MCF 10A (cell line): ENCODE measurements at regions of chr13 and their contacts with region 1.

Region 1: DNA sequence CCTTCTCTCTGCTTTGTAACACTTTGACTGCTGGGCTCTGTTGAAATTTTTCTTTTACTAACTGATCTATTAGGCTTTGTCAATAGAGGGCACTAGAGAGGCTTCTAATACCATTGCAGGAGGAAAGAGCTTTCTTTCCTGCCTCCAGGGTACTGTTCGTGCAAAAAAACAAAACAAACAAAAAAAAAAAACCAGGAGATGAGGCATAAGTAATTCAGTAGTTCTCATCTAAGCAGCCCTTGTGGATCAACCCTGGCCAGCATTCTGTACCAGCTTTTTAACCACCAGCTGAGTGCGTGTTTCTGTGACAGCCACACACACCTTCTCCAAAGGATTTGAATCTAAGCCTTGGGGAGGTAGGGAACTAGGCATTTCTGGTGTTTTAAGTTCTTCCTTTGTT is 1707.6 kb upstream of the SLC10A2 start:
- DNase-seq: peak; percentile 68
- H3K4me3 Mint-ChIP-seq: no peak overlapping the region
- H3K27ac Mint-ChIP-seq: no peak overlapping the region
- H3K4me1 Mint-ChIP-seq: peaks cover 11% of the 10 kb centered on the region
- H3K27me3 Mint-ChIP-seq: no peaks in the 10 kb centered on the region
- CTCF ChIP-seq: peak; percentile 62

Region 2: GRCh38 chr13:103883164-103883563 is 890.6 kb before region 1 on chr13:
- CTCF ChIA-PET with region 1: no interaction called
- POLR2A ChIA-PET with region 1: no interaction called
- intact Hi-C with region 1: loop called (anchors 1 kb)
- DNase-seq: peak; percentile 95
- H3K4me3 Mint-ChIP-seq: peak overlapping the region; percentile 57
- H3K27ac Mint-ChIP-seq: no peak overlapping the region
- H3K4me1 Mint-ChIP-seq: peaks cover 5% of the 10 kb centered on the region
- H3K27me3 Mint-ChIP-seq: no peaks in the 10 kb centered on the region
- CTCF ChIP-seq: peak; percentile 60

Region 3: DNA sequence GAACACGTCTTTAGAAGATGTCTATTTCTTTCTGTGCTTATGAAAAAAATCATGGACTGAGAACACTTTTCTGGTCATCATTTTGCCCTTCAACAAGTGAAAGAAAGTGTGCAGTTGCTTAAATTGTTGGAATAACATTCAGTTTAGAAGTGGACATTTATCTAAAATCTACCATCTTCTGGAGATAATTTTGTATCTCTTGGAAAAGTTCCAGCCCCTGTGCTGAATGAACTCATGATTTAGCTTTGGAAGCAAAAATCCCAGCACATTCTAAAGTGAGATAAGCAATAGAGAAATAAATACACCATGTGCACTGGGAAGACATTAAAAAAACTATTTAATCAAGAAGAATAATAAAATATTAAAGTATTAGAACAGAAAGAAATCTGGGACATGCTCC is 286.8 kb before region 1 on chr13:
- CTCF ChIA-PET with region 1: no interaction called
- POLR2A ChIA-PET with region 1: no interaction called
- intact Hi-C with region 1: no loop called
- DNase-seq: no peak
- H3K4me3 Mint-ChIP-seq: no peak overlapping the region
- H3K27ac Mint-ChIP-seq: no peak overlapping the region
- H3K4me1 Mint-ChIP-seq: no peaks in the 10 kb centered on the region
- H3K27me3 Mint-ChIP-seq: no peaks in the 10 kb centered on the region
- CTCF ChIP-seq: no peak

Region 4: GRCh38 chr13:104809483-104809882 is 35.7 kb after region 1 on chr13:
- CTCF ChIA-PET with region 1: interaction called, 3 read pairs
- POLR2A ChIA-PET with region 1: interaction called, 4 read pairs
- intact Hi-C with region 1: loop called (anchors 2 kb)
- DNase-seq: peak; percentile 87
- H3K4me3 Mint-ChIP-seq: no peak overlapping the region
- H3K27ac Mint-ChIP-seq: peak overlapping the region; percentile 63
- H3K4me1 Mint-ChIP-seq: peaks cover 14% of the 10 kb centered on the region
- H3K27me3 Mint-ChIP-seq: no peaks in the 10 kb centered on the region
- CTCF ChIP-seq: no peak

Region 5: DNA sequence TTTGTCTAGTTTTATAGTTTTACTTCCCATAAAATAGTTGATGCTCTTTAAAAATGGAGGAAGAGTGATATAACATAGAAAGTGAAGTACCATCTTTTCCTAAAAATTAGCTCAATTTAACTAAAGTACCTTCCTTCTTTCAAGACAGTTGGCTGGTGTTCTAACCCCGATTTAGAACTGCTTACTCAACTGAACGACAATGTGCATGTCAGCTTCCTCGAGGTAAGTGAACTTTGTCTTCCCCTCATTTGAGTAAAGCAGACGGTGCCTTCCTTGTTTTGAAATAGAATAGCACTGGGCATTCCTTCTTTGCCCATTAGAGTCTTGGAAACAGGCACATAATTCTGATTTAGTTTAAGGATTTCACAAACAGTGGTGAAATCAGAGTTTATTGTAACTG is 242.5 kb after region 1 on chr13:
- CTCF ChIA-PET with region 1: no interaction called
- POLR2A ChIA-PET with region 1: no interaction called
- intact Hi-C with region 1: loop called (anchors 10 kb)
- DNase-seq: no peak
- H3K4me3 Mint-ChIP-seq: no peak overlapping the region
- H3K27ac Mint-ChIP-seq: no peak overlapping the region
- H3K4me1 Mint-ChIP-seq: no peaks in the 10 kb centered on the region
- H3K27me3 Mint-ChIP-seq: no peaks in the 10 kb centered on the region
- CTCF ChIP-seq: no peak